T-cell (primary cell): ENCODE measurements at regions of chr5 and their contacts with region 1.

Region 1: GRCh38 chr5:81708889-81709288 is 42.0 kb downstream of the SSBP2 start:
- DNase-seq: no peak
- ATAC-seq: no peak
- H3K4me3 ChIP-seq: no peak overlapping the region
- H3K4me3 Mint-ChIP-seq: no peak overlapping the region
- H3K27ac ChIP-seq: no peak overlapping the region
- H3K27ac Mint-ChIP-seq: no peak overlapping the region
- H3K4me1 ChIP-seq: no peaks in the 10 kb centered on the region
- H3K4me1 Mint-ChIP-seq: peaks cover 30 to 38% (median 32%) of the 10 kb centered on the region in 3 donors
- H3K27me3 ChIP-seq: no peaks in the 10 kb centered on the region
- H3K27me3 Mint-ChIP-seq: no peaks in the 10 kb centered on the region

Region 2: DNA sequence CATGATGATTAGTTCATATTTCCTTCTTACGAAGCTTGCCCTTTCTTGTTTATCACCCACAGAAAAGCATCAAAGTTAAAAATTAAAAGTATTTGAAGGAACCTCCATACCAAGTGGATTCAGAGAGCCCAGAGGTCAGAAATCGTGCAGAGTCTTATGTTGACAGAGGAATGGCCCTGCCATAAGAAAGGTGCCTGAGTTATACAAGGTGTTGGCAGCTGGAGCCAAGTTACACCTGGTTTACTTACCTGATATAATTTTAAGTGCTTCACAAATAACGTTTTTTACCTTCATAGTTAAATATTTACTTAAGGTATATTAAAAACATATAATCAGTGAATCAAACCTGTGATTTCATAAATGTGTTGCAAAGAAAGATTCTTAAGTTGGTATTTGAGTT is 1011.8 kb before region 1 on chr5:
- CTCF ChIA-PET with region 1: interaction called in 1 of 2 experiments, 10 read pairs
- POLR2A ChIA-PET with region 1: no interaction called
- DNase-seq: no peak
- ATAC-seq: no peak
- H3K4me3 ChIP-seq: no peak overlapping the region
- H3K4me3 Mint-ChIP-seq: no peak overlapping the region
- H3K27ac ChIP-seq: no peak overlapping the region
- H3K27ac Mint-ChIP-seq: no peak overlapping the region
- H3K4me1 ChIP-seq: no peaks in the 10 kb centered on the region
- H3K4me1 Mint-ChIP-seq: peaks cover 0 to 19% (median 13%) of the 10 kb centered on the region in 3 donors
- H3K27me3 ChIP-seq: no peaks in the 10 kb centered on the region
- H3K27me3 Mint-ChIP-seq: no peaks in the 10 kb centered on the region

Region 3: GRCh38 chr5:81687292-81687691 is 21.6 kb before region 1 on chr5:
- CTCF ChIA-PET with region 1: no interaction called
- POLR2A ChIA-PET with region 1: no interaction called
- DNase-seq: no peak
- ATAC-seq: no peak
- H3K4me3 ChIP-seq: no peak overlapping the region
- H3K4me3 Mint-ChIP-seq: no peak overlapping the region
- H3K27ac ChIP-seq: no peak overlapping the region
- H3K27ac Mint-ChIP-seq: no peak overlapping the region
- H3K4me1 ChIP-seq: peaks cover 0 to 2% of the 10 kb centered on the region in 2 experiments
- H3K4me1 Mint-ChIP-seq: peaks cover 28 to 45% (median 35%) of the 10 kb centered on the region in 3 donors
- H3K27me3 ChIP-seq: no peaks in the 10 kb centered on the region
- H3K27me3 Mint-ChIP-seq: no peaks in the 10 kb centered on the region

Region 4: GRCh38 chr5:81698813-81699212 is 10.1 kb before region 1 on chr5:
- CTCF ChIA-PET with region 1: no interaction called
- POLR2A ChIA-PET with region 1: no interaction called
- DNase-seq: no peak
- ATAC-seq: no peak
- H3K4me3 ChIP-seq: no peak overlapping the region
- H3K4me3 Mint-ChIP-seq: no peak overlapping the region
- H3K27ac ChIP-seq: no peak overlapping the region
- H3K27ac Mint-ChIP-seq: no peak overlapping the region
- H3K4me1 ChIP-seq: no peaks in the 10 kb centered on the region
- H3K4me1 Mint-ChIP-seq: peaks cover 25 to 39% (median 27%) of the 10 kb centered on the region in 3 donors
- H3K27me3 ChIP-seq: no peaks in the 10 kb centered on the region
- H3K27me3 Mint-ChIP-seq: no peaks in the 10 kb centered on the region

Region 5: DNA sequence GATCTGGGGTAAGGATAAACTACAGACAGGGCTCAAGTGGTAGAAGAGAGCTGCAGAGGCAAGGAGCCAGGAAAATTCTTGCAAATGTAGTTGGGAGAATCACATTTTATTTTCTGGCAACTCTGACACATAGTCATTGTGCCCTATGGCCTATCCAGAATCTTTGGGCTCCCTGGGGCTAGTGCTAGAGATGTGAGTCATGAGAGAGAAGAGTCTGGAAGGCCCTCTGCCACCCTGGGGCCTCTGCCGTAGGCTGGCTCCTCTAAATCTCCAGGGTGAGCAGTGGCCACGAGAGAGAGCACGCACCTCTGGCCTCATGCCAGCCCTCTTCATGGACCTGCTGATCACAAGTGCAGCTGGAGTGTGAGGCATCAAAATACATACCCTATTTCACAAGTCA is 116.3 kb after region 1 on chr5:
- CTCF ChIA-PET with region 1: no interaction called
- POLR2A ChIA-PET with region 1: no interaction called
- DNase-seq: no peak
- ATAC-seq: no peak
- H3K4me3 ChIP-seq: no peak overlapping the region
- H3K4me3 Mint-ChIP-seq: no peak overlapping the region
- H3K27ac ChIP-seq: no peak overlapping the region
- H3K27ac Mint-ChIP-seq: no peak overlapping the region
- H3K4me1 ChIP-seq: no peaks in the 10 kb centered on the region
- H3K4me1 Mint-ChIP-seq: peaks cover 6 to 11% (median 8%) of the 10 kb centered on the region in 3 donors
- H3K27me3 ChIP-seq: no peaks in the 10 kb centered on the region
- H3K27me3 Mint-ChIP-seq: no peaks in the 10 kb centered on the region